Heart right ventricle (tissue), 16 donors: ENCODE measurements at regions of chr7 and their contacts with region 1.

Region 1: GRCh38 chr7:96311967-96312366 is 9.9 kb downstream of the SLC25A13 start:
- DNase-seq: peak in 1 of 2 donors; percentile 20
- ATAC-seq: peak; percentile 84 to 93 (median 89)
- H3K4me3 ChIP-seq: no peak overlapping the region
- H3K27ac ChIP-seq: peak overlapping the region in 7 of 10 donors; percentile 18 to 61 (median 40)
- H3K4me1 ChIP-seq: peaks cover 8 to 74% (median 54%) of the 10 kb centered on the region in 9 donors
- H3K27me3 ChIP-seq: no peaks in the 10 kb centered on the region
- CTCF ChIP-seq: no peak

Region 2: DNA sequence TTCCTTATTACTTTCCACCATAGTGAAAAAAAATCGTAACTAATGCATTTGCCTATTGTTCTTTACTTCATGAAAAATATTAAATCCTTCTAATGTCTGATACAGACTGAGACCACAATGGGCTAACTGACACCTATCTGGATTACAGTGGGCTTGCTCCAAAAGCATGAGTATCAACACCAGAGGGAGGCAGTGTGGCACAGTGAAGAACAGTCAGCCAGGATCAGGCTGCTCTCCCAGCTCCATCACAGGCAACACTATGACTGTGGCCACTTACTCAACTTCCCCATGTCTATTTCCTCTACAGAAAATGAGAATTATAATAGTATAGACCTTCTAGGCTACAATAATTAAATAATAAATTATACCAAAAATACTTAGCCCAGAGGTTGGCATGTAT is 87.3 kb before region 1 on chr7:
- intact Hi-C with region 1: loop called in 1 of 10 experiments (anchors 10 kb)
- DNase-seq: no peak
- ATAC-seq: peak in 1 of 8 donors; percentile 34
- H3K4me3 ChIP-seq: no peak overlapping the region
- H3K27ac ChIP-seq: no peak overlapping the region
- H3K4me1 ChIP-seq: peaks cover 0 to 6% (median 0%) of the 10 kb centered on the region in 9 donors
- H3K27me3 ChIP-seq: no peaks in the 10 kb centered on the region
- CTCF ChIP-seq: peak in 5 of 9 donors; percentile 9 to 34 (median 18)

Region 3: GRCh38 chr7:96236198-96237039 is 75.5 kb before region 1 on chr7:
- intact Hi-C with region 1: loop called in 3 of 10 experiments (anchors 5 to 10 kb)
- DNase-seq: peak in 1 of 2 donors; percentile 63
- ATAC-seq: peak; percentile 77 to 94 (median 88)
- H3K4me3 ChIP-seq: no peak overlapping the region
- H3K27ac ChIP-seq: peak overlapping the region; percentile 16 to 77 (median 39)
- H3K4me1 ChIP-seq: peaks cover 0 to 51% (median 36%) of the 10 kb centered on the region in 9 donors
- H3K27me3 ChIP-seq: no peaks in the 10 kb centered on the region
- CTCF ChIP-seq: no peak

Region 4: GRCh38 chr7:96241855-96242254 is 70.1 kb before region 1 on chr7:
- intact Hi-C with region 1: loop called in 3 of 10 experiments (anchors 5 to 10 kb)
- DNase-seq: no peak
- ATAC-seq: no peak
- H3K4me3 ChIP-seq: no peak overlapping the region
- H3K27ac ChIP-seq: no peak overlapping the region
- H3K4me1 ChIP-seq: peaks cover 0 to 58% (median 16%) of the 10 kb centered on the region in 9 donors
- H3K27me3 ChIP-seq: no peaks in the 10 kb centered on the region
- CTCF ChIP-seq: no peak

Region 5: GRCh38 chr7:96521068-96521894 is 209.3 kb after region 1 on chr7:
- intact Hi-C with region 1: no loop called
- DNase-seq: no peak
- ATAC-seq: no peak
- H3K4me3 ChIP-seq: no peak overlapping the region
- H3K27ac ChIP-seq: no peak overlapping the region
- H3K4me1 ChIP-seq: no peaks in the 10 kb centered on the region
- H3K27me3 ChIP-seq: no peaks in the 10 kb centered on the region
- CTCF ChIP-seq: no peak

Region 6: DNA sequence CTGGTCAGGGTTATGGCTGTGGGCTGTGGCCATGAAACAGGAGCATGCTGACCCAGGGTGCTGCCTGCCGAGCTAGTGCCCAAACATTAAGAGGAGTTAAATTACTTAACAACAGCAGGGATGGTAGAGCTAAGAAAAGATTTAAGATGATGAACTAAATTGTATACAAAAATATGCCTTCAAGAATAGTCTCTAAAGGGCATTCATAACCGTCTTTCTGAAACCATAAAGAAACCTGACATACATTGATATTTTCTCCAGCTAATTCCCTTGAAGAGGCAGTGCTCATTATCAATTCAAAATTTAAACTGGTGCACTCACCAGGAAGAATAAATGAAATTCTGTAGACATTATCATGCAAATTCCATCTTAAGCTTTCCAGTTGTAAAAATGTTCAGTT is 1154.1 kb after region 1 on chr7:
- intact Hi-C with region 1: no loop called
- DNase-seq: no peak
- ATAC-seq: no peak
- H3K4me3 ChIP-seq: no peak overlapping the region
- H3K27ac ChIP-seq: no peak overlapping the region
- H3K4me1 ChIP-seq: no peaks in the 10 kb centered on the region
- H3K27me3 ChIP-seq: no peaks in the 10 kb centered on the region
- CTCF ChIP-seq: no peak